Activated naive CD4-positive, alpha-beta T cell treated with anti-CD3 and anti-CD28 coated beads for 36 hours (primary cell): ENCODE measurements at regions of chr2 and their contacts with region 1.

Region 1: GRCh38 chr2:88831792-88832248 is 140.3 kb downstream of the RPIA start:
- DNase-seq: peak; percentile 74
- H3K4me3 Mint-ChIP-seq: no peak overlapping the region
- H3K27ac Mint-ChIP-seq: no peak overlapping the region
- H3K4me1 Mint-ChIP-seq: no peaks in the 10 kb centered on the region
- H3K27me3 Mint-ChIP-seq: peaks cover 2% of the 10 kb centered on the region

Region 2: DNA sequence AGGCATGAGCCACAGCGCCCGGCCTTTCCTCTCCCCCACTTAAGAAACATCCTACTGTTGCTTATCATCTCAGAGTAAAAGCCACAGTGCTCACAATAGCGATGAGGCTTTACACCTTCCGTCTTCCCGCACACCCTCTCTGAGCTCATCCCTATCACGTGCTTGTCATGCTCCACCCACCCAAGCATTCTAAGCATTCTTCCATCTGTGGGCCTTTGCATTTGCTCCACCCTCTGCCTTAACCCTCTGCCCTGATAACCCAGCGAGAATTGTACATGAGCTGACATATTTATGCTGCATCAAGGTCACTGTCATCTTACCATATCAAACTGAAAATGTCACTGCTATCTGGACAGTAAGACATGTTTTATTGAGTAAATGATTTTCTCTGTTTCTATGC is 401.9 kb before region 1 on chr2:
- CTCF ChIA-PET with region 1: no interaction called
- intact Hi-C with region 1: no loop called
- DNase-seq: no peak
- H3K4me3 Mint-ChIP-seq: no peak overlapping the region
- H3K27ac Mint-ChIP-seq: no peak overlapping the region
- H3K4me1 Mint-ChIP-seq: no peaks in the 10 kb centered on the region
- H3K27me3 Mint-ChIP-seq: peaks cover 2% of the 10 kb centered on the region

Region 3: DNA sequence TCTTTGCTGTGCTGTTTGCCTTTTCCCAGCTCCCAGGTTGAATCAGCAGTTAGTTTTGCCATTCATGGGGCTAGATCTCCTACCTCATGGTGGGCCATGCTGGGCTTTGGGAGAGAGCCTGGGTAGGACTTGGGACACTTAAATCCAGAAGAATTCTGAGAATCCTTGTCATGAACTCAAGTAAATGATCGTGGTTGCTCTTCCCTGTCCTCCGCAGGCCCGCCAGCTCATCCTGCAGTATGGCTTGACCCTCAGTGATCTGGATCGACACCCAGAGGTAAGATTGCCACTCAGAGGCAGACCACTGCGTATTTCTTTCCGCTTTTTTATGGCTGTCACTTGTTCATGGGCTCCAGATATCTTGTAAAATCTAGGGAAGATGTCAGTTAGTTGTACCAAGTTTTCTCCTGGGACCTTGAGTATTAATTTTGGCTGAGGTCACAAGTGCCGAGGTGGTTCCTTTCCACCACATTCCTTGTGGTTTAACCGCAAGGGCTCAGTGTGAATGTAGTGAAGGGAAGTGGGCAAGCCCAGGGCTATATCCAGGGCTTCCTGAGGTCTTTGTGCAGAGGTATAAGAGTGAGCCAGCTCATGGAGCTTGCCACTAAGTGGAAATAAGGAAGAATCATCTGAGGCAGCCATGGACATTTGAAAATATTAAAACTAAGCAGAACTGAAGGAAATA is 102.6 kb before region 1 on chr2:
- CTCF ChIA-PET with region 1: no interaction called
- intact Hi-C with region 1: no loop called
- DNase-seq: no peak
- H3K4me3 Mint-ChIP-seq: no peak overlapping the region
- H3K27ac Mint-ChIP-seq: no peak overlapping the region
- H3K4me1 Mint-ChIP-seq: peaks cover 4% of the 10 kb centered on the region
- H3K27me3 Mint-ChIP-seq: no peaks in the 10 kb centered on the region

Region 4: GRCh38 chr2:88765154-88765900 is 66.5 kb before region 1 on chr2:
- CTCF ChIA-PET with region 1: no interaction called
- intact Hi-C with region 1: no loop called
- DNase-seq: peak; percentile 73
- H3K4me3 Mint-ChIP-seq: peak overlapping the region; percentile 77
- H3K27ac Mint-ChIP-seq: peak overlapping the region; percentile 27
- H3K4me1 Mint-ChIP-seq: peaks cover 11% of the 10 kb centered on the region
- H3K27me3 Mint-ChIP-seq: peaks cover 13% of the 10 kb centered on the region

Region 5: GRCh38 chr2:88865801-88866371 is 34.1 kb after region 1 on chr2:
- CTCF ChIA-PET with region 1: interaction called, 10 read pairs
- intact Hi-C with region 1: loop called (anchors 5 kb)
- DNase-seq: no peak
- H3K4me3 Mint-ChIP-seq: no peak overlapping the region
- H3K27ac Mint-ChIP-seq: no peak overlapping the region
- H3K4me1 Mint-ChIP-seq: peaks cover 16% of the 10 kb centered on the region
- H3K27me3 Mint-ChIP-seq: peaks cover 18% of the 10 kb centered on the region

Region 6: DNA sequence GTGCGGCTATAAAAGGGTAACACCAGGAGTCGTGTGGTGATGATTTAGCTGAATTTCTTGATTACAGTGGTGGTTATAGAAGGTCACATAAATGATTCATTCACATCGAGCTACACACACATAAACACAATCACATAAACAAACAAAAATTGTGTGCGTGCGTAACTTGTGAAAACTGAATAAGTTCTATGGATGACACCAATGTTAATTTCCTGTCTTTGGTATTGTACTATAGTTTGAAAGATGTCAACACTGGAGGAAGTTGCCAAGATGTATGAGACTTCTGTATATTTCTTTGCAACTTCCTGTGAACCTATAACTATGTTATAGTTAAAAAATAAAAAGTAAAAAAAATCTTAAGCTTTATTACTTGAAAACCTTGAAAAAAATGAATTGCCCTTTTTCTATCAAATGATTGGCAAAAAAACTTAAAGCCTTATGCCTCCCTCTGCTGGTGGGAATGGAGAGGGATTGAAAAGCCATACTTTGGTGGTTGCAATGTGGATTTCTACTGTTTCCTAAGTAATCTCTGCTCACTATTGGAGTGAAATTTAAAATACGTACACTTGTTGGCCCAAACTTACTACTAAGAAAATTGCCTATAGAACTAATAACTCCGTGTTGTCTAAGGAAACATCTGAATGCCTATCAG is 87.4 kb after region 1 on chr2:
- CTCF ChIA-PET with region 1: no interaction called
- intact Hi-C with region 1: loop called (anchors 2 kb)
- DNase-seq: peak; percentile 23
- H3K4me3 Mint-ChIP-seq: no peak overlapping the region
- H3K27ac Mint-ChIP-seq: no peak overlapping the region
- H3K4me1 Mint-ChIP-seq: no peaks in the 10 kb centered on the region
- H3K27me3 Mint-ChIP-seq: peaks cover 7% of the 10 kb centered on the region